B cell (primary cell): ENCODE measurements at regions of chr6 and their contacts with region 1.

Region 1: GRCh38 chr6:97059473-97059872 is 134.9 kb downstream of the KLHL32 start:
- DNase-seq: peak; percentile 54
- ATAC-seq: peak; percentile 47
- H3K4me3 ChIP-seq: no peak overlapping the region
- H3K4me3 Mint-ChIP-seq: no peak overlapping the region
- H3K27ac ChIP-seq: no peak overlapping the region
- H3K27ac Mint-ChIP-seq: no peak overlapping the region
- H3K4me1 ChIP-seq: no peaks in the 10 kb centered on the region
- H3K4me1 Mint-ChIP-seq: no peaks in the 10 kb centered on the region
- H3K27me3 ChIP-seq: no peaks in the 10 kb centered on the region
- H3K27me3 Mint-ChIP-seq: peaks cover 12% of the 10 kb centered on the region
- CTCF ChIP-seq: peak; percentile 72

Region 2: DNA sequence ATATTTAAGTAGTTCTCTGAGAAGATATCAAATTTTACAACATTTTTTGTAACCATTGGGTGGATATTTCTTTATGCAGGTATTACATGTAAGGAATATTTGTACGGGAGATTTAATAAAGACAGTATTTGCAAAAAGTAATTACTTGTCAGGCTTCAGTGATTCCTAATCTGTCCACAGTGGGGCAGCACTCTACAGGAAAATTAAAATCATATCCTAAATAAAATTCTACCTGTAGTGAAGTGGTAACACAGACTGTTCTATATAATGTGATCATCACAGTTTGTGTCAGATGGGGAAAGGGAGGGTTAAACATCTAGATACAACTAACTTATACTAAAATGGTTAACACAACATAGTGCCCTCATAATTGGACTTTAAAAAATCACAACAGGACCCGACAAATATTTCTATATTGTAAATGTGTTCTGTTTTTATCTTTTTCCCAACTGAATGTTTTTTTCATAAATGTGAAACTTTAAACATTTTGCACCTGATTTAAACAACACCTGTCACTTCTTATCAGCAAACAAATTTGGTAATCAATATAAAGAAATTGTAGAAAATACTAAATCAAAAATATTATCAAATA is 1627.7 kb before region 1 on chr6:
- CTCF ChIA-PET with region 1: interaction called, 3 read pairs
- POLR2A ChIA-PET with region 1: no interaction called
- intact Hi-C with region 1: loop called (anchors 2 kb)
- DNase-seq: peak; percentile 19
- ATAC-seq: no peak
- H3K4me3 ChIP-seq: no peak overlapping the region
- H3K4me3 Mint-ChIP-seq: no peak overlapping the region
- H3K27ac ChIP-seq: no peak overlapping the region
- H3K27ac Mint-ChIP-seq: no peak overlapping the region
- H3K4me1 ChIP-seq: no peaks in the 10 kb centered on the region
- H3K4me1 Mint-ChIP-seq: no peaks in the 10 kb centered on the region
- H3K27me3 ChIP-seq: no peaks in the 10 kb centered on the region
- H3K27me3 Mint-ChIP-seq: no peaks in the 10 kb centered on the region
- CTCF ChIP-seq: peak; percentile 69

Region 3: DNA sequence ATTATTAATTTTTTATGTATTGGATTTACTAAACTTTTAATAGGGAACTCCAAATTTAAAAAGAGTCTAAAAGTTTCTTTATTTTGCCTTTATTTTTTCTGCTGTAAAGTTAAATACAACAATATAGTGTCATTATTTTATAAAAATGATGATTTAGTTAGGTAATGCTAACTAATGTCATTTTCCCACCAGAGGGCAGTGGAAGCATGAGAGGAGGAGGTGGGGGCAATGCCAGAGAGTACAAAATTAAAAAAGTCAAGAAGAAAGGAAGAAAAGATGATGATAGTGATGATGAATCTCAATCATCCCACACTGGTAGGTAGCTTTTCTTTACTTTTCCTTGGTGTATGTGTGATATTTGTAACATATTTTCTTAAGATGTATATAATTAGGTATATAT is 516.8 kb before region 1 on chr6:
- CTCF ChIA-PET with region 1: interaction called, 3 read pairs
- POLR2A ChIA-PET with region 1: no interaction called
- intact Hi-C with region 1: loop called (anchors 2 kb)
- DNase-seq: peak; percentile 21
- ATAC-seq: no peak
- H3K4me3 ChIP-seq: no peak overlapping the region
- H3K4me3 Mint-ChIP-seq: no peak overlapping the region
- H3K27ac ChIP-seq: no peak overlapping the region
- H3K27ac Mint-ChIP-seq: no peak overlapping the region
- H3K4me1 ChIP-seq: no peaks in the 10 kb centered on the region
- H3K4me1 Mint-ChIP-seq: no peaks in the 10 kb centered on the region
- H3K27me3 ChIP-seq: no peaks in the 10 kb centered on the region
- H3K27me3 Mint-ChIP-seq: no peaks in the 10 kb centered on the region
- CTCF ChIP-seq: peak; percentile 49

Region 4: GRCh38 chr6:96626759-96627364 is 432.6 kb before region 1 on chr6:
- CTCF ChIA-PET with region 1: interaction called, 69 read pairs
- POLR2A ChIA-PET with region 1: no interaction called
- intact Hi-C with region 1: loop called (anchors 1 kb)
- DNase-seq: peak; percentile 40
- ATAC-seq: peak; percentile 67
- H3K4me3 ChIP-seq: no peak overlapping the region
- H3K4me3 Mint-ChIP-seq: no peak overlapping the region
- H3K27ac ChIP-seq: no peak overlapping the region
- H3K27ac Mint-ChIP-seq: no peak overlapping the region
- H3K4me1 ChIP-seq: peaks cover 3 to 4% of the 10 kb centered on the region in 2 donors
- H3K4me1 Mint-ChIP-seq: peaks cover 4% of the 10 kb centered on the region
- H3K27me3 ChIP-seq: no peaks in the 10 kb centered on the region
- H3K27me3 Mint-ChIP-seq: peaks cover 13% of the 10 kb centered on the region
- CTCF ChIP-seq: peak; percentile 63

Region 5: DNA sequence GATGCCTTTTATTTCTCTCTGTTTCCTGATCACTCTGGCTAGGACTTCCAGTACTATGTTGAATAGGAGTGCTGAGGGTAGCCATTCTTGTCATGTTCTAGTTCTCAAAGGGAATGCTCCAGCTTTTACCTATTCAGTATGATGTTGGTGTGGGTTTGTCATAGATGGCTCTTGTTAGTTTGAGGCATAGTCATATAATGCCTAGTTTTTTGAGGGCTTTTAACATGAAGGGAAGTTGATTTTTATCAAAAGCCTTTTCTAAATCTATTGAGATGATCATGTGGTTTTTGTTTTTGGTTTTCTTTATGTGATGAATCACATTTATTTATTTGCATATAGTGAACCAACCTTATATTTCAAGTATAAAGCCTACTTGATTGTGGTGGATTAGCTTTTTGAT is 79.3 kb before region 1 on chr6:
- CTCF ChIA-PET with region 1: no interaction called
- POLR2A ChIA-PET with region 1: no interaction called
- intact Hi-C with region 1: no loop called
- DNase-seq: no peak
- ATAC-seq: no peak
- H3K4me3 ChIP-seq: no peak overlapping the region
- H3K4me3 Mint-ChIP-seq: no peak overlapping the region
- H3K27ac ChIP-seq: no peak overlapping the region
- H3K27ac Mint-ChIP-seq: no peak overlapping the region
- H3K4me1 ChIP-seq: no peaks in the 10 kb centered on the region
- H3K4me1 Mint-ChIP-seq: no peaks in the 10 kb centered on the region
- H3K27me3 ChIP-seq: no peaks in the 10 kb centered on the region
- H3K27me3 Mint-ChIP-seq: peaks cover under 1% of the 10 kb centered on the region
- CTCF ChIP-seq: no peak